Adrenal gland (tissue), 19 donors: ENCODE measurements at regions of chr1 and their contacts with region 1.

Region 1: DNA sequence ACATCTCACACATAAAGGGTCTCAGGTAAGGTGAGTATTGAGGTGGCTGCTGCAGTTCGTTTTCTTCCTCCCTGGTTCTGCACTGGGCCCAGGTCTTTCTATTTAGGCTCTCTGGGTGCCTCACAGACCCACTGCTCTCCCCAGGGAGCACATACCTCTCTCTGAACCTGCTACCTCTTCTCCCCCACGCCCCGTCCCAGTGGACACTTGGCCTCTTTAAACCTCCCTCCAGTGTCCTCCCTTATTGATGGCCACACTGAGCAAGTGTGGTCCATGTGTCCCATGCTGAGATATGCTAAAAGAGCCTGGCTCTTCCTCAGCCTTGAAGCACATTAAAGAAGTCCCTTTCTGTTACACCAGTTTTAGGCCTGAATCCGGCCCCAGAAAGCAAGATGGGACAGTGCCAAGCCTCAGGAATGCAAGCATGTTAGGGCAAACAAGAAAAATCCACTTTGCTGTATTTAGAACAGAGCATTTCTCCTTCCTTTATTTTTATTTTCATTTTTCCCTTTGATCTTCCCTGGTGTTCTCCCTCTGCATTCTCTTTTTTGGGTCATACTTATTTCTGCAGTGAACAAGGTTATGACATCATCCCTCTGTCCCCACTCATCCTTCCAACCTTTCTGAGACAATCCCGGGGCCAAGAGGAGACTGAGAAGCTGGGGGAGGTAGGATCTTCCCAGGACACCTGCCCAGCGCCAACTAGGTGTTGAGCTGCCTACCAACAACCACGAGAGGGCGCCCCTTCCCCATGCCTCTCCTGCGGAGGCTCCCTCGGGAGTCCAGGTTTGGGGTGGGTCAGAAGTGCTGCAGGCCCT is 5.0 kb upstream of the CHI3L2 start:
- DNase-seq: peak; percentile 75 to 91 (median 83)
- H3K4me3 ChIP-seq: no peak overlapping the region
- H3K27ac ChIP-seq: no peak overlapping the region
- H3K4me1 ChIP-seq: peaks cover 10 to 11% of the 10 kb centered on the region in 2 donors
- H3K27me3 ChIP-seq: no peaks in the 10 kb centered on the region
- CTCF ChIP-seq: peak; percentile 79 to 95 (median 90)
- POLR2A ChIP-seq: no peak

Region 2: GRCh38 chr1:110948038-110948810 is 274.3 kb before region 1 on chr1:
- intact Hi-C with region 1: no loop called
- DNase-seq: no peak
- H3K4me3 ChIP-seq: no peak overlapping the region
- H3K27ac ChIP-seq: no peak overlapping the region
- H3K4me1 ChIP-seq: no peaks in the 10 kb centered on the region
- H3K27me3 ChIP-seq: no peaks in the 10 kb centered on the region
- CTCF ChIP-seq: no peak
- POLR2A ChIP-seq: no peak

Region 3: DNA sequence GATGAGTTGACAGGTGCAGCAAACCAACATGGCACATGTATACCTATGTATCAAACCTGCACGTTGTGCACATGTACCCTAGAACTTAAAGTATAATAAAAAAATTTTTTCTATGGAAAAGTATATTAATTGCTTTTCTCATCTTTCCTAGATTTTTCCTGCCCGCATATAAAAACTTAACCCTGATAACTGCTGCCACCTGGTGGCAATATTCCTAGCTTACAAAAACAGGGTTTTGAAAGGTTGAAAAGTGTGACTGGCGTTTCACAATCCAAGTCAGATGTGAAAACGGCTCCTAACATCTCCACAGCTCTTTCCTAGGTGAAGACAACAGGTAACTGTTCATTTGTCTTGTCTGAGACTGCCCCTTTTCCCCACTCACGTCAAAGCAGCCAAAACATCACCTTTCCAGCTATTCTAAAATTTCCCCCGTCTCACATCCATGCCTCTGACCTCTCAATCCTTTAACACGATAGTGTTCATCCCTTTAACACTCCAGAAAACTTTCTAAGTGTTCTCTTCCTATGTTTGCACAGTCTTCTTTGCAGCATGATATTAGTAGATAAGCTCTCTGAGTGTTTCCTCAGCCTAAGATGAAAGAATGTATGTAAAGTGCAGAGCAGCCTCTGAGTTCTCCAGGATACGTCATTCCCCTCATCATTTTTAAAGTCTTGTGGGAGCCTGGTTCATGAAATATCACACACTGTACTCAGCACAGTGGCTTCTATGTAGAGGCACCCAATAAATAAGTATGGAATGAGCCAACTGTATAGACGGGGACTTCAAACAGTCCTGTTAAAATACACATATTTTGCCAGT is 177.5 kb after region 1 on chr1:
- intact Hi-C with region 1: loop called (anchors 5 kb)
- DNase-seq: peak; percentile 36 to 76 (median 63)
- H3K4me3 ChIP-seq: no peak overlapping the region
- H3K27ac ChIP-seq: no peak overlapping the region
- H3K4me1 ChIP-seq: no peaks in the 10 kb centered on the region
- H3K27me3 ChIP-seq: peaks cover 5% of the 10 kb centered on the region
- CTCF ChIP-seq: peak; percentile 54 to 79 (median 70)
- POLR2A ChIP-seq: no peak